ENCODE measurements at regions of chr5 and their contacts with region 1.

Region 1: GRCh38 chr5:73454351-73455036 is 5.9 kb upstream of the FOXD1 start:
- DNase-seq: peak; percentile 69 to 80
- H3K4me3 ChIP-seq: no peak overlapping the region
- H3K27ac ChIP-seq: no peak overlapping the region
- H3K4me1 ChIP-seq: peaks cover 15% of the 10 kb centered on the region; the same call in 1 of the 2 replicates
- H3K27me3 ChIP-seq: no peaks in the 10 kb centered on the region
- CTCF ChIP-seq: peak; percentile 84

Region 2: GRCh38 chr5:72920690-72921502 is 533.6 kb before region 1 on chr5:
- CTCF ChIA-PET with region 1: no interaction called
- POLR2A ChIA-PET with region 1: no interaction called
- intact Hi-C with region 1: loop called (anchors 2 kb)
- DNase-seq: peak in 1 of 2 experiments; percentile 52
- H3K4me3 ChIP-seq: no peak overlapping the region
- H3K27ac ChIP-seq: no peak overlapping the region
- H3K4me1 ChIP-seq: no peaks in the 10 kb centered on the region
- H3K27me3 ChIP-seq: no peaks in the 10 kb centered on the region
- CTCF ChIP-seq: peak; percentile 69

Region 3: DNA sequence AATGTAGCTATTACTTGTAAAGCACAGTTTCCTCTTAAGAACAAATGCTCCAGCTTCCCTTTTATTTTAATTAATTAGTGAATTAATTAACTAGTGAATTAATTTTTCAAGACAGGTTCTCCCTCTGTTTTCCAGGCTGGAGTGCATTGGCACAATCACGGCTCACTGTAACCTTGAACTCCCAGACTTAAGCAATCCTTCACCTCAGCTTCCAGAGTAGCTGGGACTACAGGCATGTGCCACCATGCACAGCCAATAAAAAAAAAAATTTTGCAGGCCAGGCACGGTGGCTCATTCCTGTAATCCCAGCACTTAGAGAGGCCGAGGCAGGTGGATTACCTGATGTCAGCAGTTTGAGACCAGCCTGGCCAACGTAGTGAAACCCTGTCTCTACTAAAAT is 454.6 kb before region 1 on chr5:
- CTCF ChIA-PET with region 1: no interaction called
- POLR2A ChIA-PET with region 1: no interaction called
- intact Hi-C with region 1: loop called (anchors 5 kb)
- DNase-seq: no peak
- H3K4me3 ChIP-seq: no peak overlapping the region
- H3K27ac ChIP-seq: no peak overlapping the region
- H3K4me1 ChIP-seq: no peaks in the 10 kb centered on the region
- H3K27me3 ChIP-seq: no peaks in the 10 kb centered on the region
- CTCF ChIP-seq: no peak

Region 4: GRCh38 chr5:73120222-73121118 is 334.0 kb before region 1 on chr5 and contains the start of gene TMEM171:
- CTCF ChIA-PET with region 1: interaction called, 3 read pairs
- POLR2A ChIA-PET with region 1: interaction called, 23 read pairs
- intact Hi-C with region 1: no loop called
- DNase-seq: peak; percentile 66 to 79
- H3K4me3 ChIP-seq: peak within 1 kb of the TSS; percentile 100
- H3K27ac ChIP-seq: peak within 1 kb of the TSS; percentile 92
- H3K4me1 ChIP-seq: peaks cover 47% of the 10 kb centered on the region
- H3K27me3 ChIP-seq: no peaks in the 10 kb centered on the region
- CTCF ChIP-seq: no peak
- total RNA-seq, gene TMEM171: 7.8 and 9.9 TPM in 2 replicates

Region 5: DNA sequence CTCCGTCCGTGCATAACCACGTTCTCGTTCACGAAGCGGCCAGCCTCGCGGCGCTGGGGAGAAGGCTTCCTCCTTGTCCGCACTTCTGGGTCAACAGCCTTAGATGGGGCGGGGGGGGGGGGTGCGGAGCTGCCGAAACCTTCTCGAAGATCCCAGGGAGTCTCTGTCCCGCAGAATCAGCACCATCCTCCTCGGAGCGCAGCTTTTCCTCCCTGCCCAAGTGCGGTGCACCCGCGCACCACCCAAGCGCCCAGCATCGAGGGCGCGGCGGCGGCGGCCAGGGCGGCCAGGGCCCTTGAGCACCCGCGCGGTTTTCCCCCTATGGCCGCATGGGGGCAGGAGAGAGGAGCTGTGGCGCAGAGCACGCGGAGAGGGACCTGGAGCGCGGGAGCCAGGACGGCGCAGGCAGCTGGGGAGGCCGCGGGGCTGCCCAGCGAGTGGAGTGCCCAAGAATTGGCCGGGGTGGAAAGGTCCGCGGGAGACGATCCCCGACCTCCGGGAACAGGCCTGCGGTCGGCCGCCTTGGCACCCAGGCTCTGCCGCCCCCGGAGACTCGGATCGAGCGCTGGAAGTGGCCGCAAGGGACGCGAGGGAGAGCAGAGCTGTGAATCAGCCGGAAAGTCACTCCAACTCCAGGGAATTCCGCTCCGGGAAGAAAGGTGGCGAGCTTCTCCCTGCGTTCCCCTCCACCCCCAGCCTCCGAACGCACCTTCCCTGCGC is 238.4 kb before region 1 on chr5:
- CTCF ChIA-PET with region 1: interaction called, 19 read pairs
- POLR2A ChIA-PET with region 1: no interaction called
- intact Hi-C with region 1: loop called (anchors 1 kb)
- DNase-seq: peak; percentile 58 to 85
- H3K4me3 ChIP-seq: peak overlapping the region; percentile 79
- H3K27ac ChIP-seq: peak overlapping the region; percentile 64
- H3K4me1 ChIP-seq: 0 out of 2 replicates have a peak, but pooled peaks cover 4% of the 10 kb centered on the region
- H3K27me3 ChIP-seq: no peaks in the 10 kb centered on the region
- CTCF ChIP-seq: peak; percentile 89

Region 6: GRCh38 chr5:73515223-73515622 is 60.7 kb after region 1 on chr5:
- CTCF ChIA-PET with region 1: no interaction called
- POLR2A ChIA-PET with region 1: no interaction called
- intact Hi-C with region 1: no loop called
- DNase-seq: peak; percentile 19 to 72
- H3K4me3 ChIP-seq: no peak overlapping the region
- H3K27ac ChIP-seq: no peak overlapping the region
- H3K4me1 ChIP-seq: peaks cover 21% of the 10 kb centered on the region
- H3K27me3 ChIP-seq: no peaks in the 10 kb centered on the region
- CTCF ChIP-seq: no peak

Region 7: DNA sequence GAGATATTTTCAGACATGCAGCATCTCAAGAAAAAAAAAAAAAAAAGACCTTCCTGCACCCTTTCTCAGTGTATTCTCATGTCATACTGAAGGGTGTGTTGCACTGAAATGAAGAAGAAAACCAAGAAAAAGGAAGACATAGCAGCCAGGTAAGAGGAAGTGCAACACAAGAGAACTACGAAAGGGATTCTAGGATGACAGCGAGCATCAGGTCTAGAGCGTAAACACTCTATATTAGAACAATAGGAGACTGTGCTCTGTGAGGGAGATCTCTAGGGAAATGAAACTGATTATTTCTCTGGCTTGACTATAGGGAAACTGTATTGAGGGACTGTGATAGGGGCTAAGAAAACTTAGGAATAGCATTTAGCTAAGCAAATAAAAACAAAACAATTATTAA is 73.8 kb after region 1 on chr5:
- CTCF ChIA-PET with region 1: interaction called, 15 read pairs
- POLR2A ChIA-PET with region 1: no interaction called
- intact Hi-C with region 1: no loop called
- DNase-seq: no peak
- H3K4me3 ChIP-seq: no peak overlapping the region
- H3K27ac ChIP-seq: no peak overlapping the region
- H3K4me1 ChIP-seq: 0 out of 2 replicates have a peak, but pooled peaks cover 5% of the 10 kb centered on the region
- H3K27me3 ChIP-seq: no peaks in the 10 kb centered on the region
- CTCF ChIP-seq: no peak

Region 8: DNA sequence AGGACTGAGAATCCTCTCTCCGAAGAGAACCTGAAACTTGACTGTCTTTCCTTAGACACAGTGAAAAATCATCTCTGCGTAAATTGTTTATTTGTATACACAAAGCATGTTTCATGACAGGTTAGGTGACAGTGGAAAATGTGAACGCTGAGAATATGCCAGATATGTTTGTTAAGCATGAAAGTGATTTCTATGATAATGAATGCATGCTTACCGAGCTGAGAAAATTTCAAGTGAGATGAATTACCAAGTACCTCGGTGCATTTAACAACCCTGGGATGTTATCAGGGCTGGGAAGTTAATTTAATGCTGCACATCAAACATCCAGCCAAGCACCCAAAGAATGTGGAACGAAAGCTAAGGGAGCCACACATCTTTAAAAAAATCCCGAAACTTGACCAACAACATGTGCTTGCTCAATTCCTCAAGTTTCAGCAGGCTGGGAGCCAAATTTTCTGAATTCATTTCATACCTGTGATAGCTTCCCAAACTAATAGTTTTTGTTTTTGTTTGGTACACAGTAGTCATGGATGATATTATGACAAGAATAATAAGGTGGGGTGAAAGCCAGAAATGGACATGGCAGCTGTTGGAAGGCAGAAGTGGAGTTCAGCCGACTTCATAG is 508.4 kb after region 1 on chr5:
- CTCF ChIA-PET with region 1: no interaction called
- POLR2A ChIA-PET with region 1: no interaction called
- intact Hi-C with region 1: no loop called
- DNase-seq: peak; percentile 62 to 89
- H3K4me3 ChIP-seq: no peak overlapping the region
- H3K27ac ChIP-seq: peak overlapping the region; percentile 62
- H3K4me1 ChIP-seq: peaks cover 6% of the 10 kb centered on the region
- H3K27me3 ChIP-seq: no peaks in the 10 kb centered on the region
- CTCF ChIP-seq: no peak

Measured in PC-9 (cell line).